ENCODE measurements at regions of chr19 and their contacts with region 1.

Region 1: DNA sequence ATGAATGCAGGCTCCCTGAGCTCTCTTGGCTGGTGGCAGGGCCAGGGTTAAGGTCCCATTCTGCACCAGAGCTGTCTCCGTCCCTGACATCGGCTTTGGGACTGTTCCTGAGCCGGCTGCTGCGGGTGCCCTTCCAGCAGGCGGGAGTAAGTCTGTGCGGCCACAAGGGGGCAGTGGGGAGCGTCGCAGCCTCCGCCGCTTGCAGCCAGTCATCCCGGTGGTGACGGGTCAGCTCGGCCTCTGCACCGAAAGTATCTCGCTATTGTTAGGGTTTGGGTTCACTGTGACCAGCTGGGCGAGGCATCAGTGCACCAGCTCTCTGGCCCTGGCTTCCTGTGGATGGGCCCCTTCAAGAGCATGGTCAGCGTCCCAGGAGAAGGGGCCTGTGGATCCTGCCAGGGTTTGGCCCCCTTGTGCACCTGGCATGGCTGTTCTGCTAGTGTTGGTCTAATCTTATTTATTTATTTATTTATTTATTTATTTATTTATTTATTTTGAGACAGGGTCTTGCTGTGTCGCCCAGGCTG is 15.1 kb downstream of the NDUFB7 start:
- DNase-seq: peak; percentile 78 to 87 (median 84)
- H3K4me3 ChIP-seq: peak overlapping the region in 2 of 7 experiments; percentile 19 to 70
- H3K27ac ChIP-seq: no peak overlapping the region
- H3K4me1 ChIP-seq: peaks cover 0 to 43% (median 38%) of the 10 kb centered on the region in 4 experiments
- H3K27me3 ChIP-seq: no peaks in the 10 kb centered on the region

Region 2: GRCh38 chr19:14505488-14506432 is 51.0 kb before region 1 on chr19:
- CTCF ChIA-PET with region 1: interaction called, 34 read pairs
- POLR2A ChIA-PET with region 1: no interaction called
- DNase-seq: peak; percentile 63 to 81 (median 76)
- H3K4me3 ChIP-seq: no peak overlapping the region
- H3K27ac ChIP-seq: no peak overlapping the region
- H3K4me1 ChIP-seq: peaks cover 5 to 11% (median 6%) of the 10 kb centered on the region in 4 experiments
- H3K27me3 ChIP-seq: no peaks in the 10 kb centered on the region

Region 3: GRCh38 chr19:14517840-14518505 is 38.8 kb before region 1 on chr19 and contains the start of gene DNAJB1:
- CTCF ChIA-PET with region 1: interaction called, 13 read pairs
- POLR2A ChIA-PET with region 1: interaction called, 11 read pairs
- DNase-seq: peak in 1 of 3 donors; percentile 45
- H3K4me3 ChIP-seq: peak within 1 kb of the TSS; percentile 85 to 96 (median 93)
- H3K27ac ChIP-seq: peak within 1 kb of the TSS; percentile 93 to 96
- H3K4me1 ChIP-seq: peaks cover 2 to 49% (median 26%) of the 10 kb centered on the region in 4 experiments
- H3K27me3 ChIP-seq: no peaks in the 10 kb centered on the region

Region 4: GRCh38 chr19:14542711-14543328 is 13.9 kb before region 1 on chr19:
- CTCF ChIA-PET with region 1: interaction called, 10 read pairs
- POLR2A ChIA-PET with region 1: interaction called, 4 read pairs
- DNase-seq: peak; percentile 55 to 93 (median 88)
- H3K4me3 ChIP-seq: peak overlapping the region in 2 of 7 experiments; percentile 19 to 45
- H3K27ac ChIP-seq: peak overlapping the region in 1 of 2 experiments; percentile 60
- H3K4me1 ChIP-seq: peaks cover 0 to 22% (median 20%) of the 10 kb centered on the region in 4 experiments
- H3K27me3 ChIP-seq: no peaks in the 10 kb centered on the region

Region 5: DNA sequence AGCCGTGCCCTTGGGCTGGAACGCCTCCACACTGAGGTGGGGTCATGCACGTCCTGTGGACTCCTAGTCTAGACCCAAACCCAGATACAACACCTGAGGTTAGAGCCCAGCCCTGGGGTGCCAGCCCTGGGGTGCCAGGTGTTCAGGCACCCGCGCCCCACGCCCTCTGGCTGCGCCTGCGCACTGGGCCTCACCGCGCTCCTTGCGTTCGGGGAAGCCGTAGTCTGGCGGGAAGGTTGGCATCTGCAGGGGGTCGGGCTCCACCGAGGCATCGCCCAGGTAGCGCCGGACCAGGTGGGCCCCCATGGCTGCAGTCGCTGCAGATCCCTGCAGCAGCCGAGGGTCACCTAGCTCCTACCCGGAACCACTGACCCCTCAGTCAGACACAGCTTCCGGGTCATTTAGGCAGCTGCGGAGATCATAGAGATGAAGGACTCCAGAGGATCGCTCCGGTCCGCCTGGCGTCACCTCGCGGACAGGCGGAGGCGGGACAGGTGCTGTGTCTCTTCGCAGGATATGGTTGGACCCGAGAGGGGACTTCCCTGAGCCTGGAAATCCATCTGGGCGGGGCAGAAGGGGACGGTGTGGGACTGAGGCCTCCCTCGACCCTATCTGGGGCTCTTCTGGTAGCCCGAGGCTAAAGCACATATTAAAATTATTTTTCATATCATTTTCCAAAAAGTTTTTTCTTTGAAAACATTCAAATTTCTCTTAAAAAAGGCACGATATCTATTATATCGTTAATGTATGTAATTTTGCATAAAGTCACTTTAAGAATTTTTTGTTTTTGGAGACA is 15.2 kb after region 1 on chr19 and contains the start of gene NDUFB7:
- CTCF ChIA-PET with region 1: interaction called, 26 read pairs
- POLR2A ChIA-PET with region 1: no interaction called
- DNase-seq: peak; percentile 89 to 94 (median 89)
- H3K4me3 ChIP-seq: peak within 1 kb of the TSS; percentile 78 to 99 (median 95)
- H3K27ac ChIP-seq: peak within 1 kb of the TSS; percentile 62 to 84
- H3K4me1 ChIP-seq: peaks cover 2 to 23% (median 18%) of the 10 kb centered on the region in 4 experiments
- H3K27me3 ChIP-seq: no peaks in the 10 kb centered on the region

Region 6: GRCh38 chr19:14595516-14595915 is 38.8 kb after region 1 on chr19:
- CTCF ChIA-PET with region 1: no interaction called
- POLR2A ChIA-PET with region 1: no interaction called
- DNase-seq: no peak
- H3K4me3 ChIP-seq: no peak overlapping the region
- H3K27ac ChIP-seq: no peak overlapping the region
- H3K4me1 ChIP-seq: peaks cover 0 to 2% (median 0%) of the 10 kb centered on the region in 4 experiments
- H3K27me3 ChIP-seq: no peaks in the 10 kb centered on the region

Region 7: DNA sequence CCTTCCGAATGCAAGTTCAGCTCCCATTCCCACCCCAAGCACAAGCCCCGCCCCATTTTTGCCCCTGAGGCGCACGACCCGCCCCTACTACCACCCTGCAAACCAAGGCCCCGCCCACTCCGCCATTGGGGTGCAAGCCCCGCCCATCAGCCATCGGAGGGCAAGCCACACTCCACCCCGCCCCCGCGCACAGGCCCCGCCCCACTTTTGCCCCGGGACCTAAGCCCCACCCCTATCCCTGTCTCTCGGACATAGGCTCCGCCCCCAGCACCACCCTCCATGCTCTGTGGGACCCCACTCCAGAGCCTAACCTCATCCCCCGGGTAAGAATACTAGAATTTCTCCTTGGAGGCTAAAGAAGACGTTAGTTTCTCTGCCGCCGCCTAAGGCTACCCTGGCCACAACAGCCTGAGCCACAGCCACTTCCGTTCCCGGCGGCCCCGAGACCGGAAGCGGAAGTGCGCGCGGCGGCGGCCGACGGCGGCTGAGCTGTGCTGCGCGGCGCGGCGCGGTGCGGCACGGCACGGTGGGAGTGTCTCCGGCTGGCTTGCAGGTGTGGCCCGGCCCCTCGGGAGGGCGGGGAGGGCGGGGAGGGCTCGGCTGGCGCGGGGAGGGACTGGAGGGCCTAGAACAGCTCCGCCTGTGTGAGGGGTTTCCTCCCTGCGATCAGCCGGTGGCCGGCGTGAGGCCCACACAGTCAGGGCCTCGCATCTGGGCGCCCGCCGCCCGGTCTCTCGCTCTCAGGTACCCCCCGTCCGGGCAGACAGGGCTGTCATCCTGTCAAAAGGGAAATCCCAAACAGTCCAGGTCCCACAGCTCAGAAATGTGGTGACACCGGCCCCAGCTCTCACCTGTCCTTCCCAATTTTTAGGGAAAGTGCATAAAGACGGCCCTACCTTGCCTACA is 133.1 kb after region 1 on chr19 and contains the start of gene ZNF333:
- CTCF ChIA-PET with region 1: interaction called, 24 read pairs
- POLR2A ChIA-PET with region 1: no interaction called
- DNase-seq: peak; percentile 93 to 97 (median 96)
- H3K4me3 ChIP-seq: peak within 1 kb of the TSS; percentile 60 to 97 (median 87)
- H3K27ac ChIP-seq: peak within 1 kb of the TSS; percentile 89 to 95
- H3K4me1 ChIP-seq: peaks cover 5 to 33% (median 24%) of the 10 kb centered on the region in 4 experiments
- H3K27me3 ChIP-seq: no peaks in the 10 kb centered on the region

Measured in common myeloid progenitor, CD34-positive (primary cell).